Activated CD4-positive, alpha-beta T cell treated with anti-CD3 and anti-CD28 coated beads, Interleukin-2, amount 10 ng/mL, durations not matched to agents 24 days and 14 days (primary cell): ENCODE measurements at regions of chr20 and their contacts with region 1.

Region 1: DNA sequence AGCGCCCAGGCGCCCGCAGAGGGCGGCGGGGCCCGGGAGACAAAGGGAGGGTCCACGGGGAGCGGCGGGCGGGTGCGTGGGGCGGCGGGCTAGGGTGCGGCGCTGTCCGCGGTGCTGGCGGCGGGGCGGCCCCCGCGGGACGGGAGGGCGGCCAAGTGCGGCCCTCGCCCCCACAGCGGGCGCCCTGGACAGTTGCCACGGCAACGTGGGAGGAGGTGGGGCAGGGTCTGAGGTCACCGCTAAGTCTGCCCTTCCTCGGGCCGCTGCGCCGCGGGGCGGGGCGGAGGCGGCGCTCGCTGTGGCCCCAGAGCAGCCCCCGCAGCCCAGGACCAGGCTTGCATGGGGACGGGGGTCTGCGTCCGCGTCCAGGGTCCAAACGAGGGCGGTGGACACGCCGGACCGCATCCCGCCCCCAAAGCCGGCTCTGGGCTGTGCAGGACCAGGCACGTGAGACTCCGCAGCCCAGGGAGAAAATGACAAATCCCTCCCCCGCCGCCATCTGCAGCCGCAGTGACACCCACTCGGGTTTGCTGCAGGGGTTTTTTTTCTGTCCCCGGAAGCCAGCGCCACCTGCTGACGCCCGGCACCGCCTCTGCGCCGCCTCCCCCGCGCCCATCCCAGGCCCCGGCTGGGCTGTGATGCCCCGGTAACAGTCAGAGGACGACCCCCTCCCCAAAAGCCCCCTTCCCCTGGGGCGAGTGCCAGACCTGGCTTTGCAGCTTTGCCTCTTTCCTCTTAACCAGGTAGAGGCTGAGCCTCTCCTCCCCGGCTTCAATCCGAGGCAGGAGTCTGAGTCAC is 36.8 kb downstream of the YTHDF1 start:
- DNase-seq: peak; percentile 84
- H3K4me3 Mint-ChIP-seq: peak overlapping the region; percentile 59
- H3K27ac Mint-ChIP-seq: peak overlapping the region; percentile 41
- H3K4me1 Mint-ChIP-seq: peaks cover 9% of the 10 kb centered on the region
- H3K27me3 Mint-ChIP-seq: peaks cover 39% of the 10 kb centered on the region

Region 2: DNA sequence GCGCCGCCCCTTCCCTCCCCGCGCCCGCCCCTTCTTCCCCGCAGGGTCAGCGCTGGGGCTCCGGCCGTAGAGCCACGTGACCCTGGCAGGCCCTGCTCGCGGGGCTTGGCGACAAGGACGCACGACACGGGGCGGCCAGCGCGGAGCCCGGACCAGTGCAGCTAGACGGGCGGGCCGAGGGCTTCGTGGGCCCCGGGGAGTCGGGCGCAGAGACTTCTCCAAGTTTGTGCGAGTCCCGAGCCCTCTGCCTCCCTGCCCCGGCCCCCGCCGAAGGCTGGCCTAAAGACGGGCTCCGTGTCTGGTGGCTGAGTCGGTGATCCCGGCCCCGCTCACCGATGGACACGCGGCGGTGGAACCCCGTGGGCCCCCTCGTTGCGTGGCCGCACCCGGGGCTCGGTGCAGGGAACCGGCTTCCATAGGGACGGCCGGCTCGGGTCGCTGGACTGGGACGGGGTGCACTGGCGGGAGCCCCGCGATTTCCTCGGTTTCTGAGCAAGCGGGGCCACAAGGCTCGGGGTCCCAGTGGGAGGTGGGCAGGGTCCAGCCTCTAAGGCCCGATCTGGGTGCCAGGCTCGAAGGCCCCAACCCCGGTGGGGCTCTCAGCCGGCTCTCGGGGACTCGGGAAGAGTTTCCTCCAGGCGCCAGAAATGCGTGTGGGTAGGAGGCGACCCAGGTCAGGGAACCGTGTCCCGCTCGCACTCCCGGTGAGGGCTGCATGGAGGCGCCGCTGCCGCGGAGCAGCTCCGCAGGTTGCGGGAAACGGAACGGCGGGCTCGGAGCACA is 702.8 kb before region 1 on chr20:
- intact Hi-C with region 1: loop called (anchors 5 kb)
- DNase-seq: no peak
- H3K4me3 Mint-ChIP-seq: no peak overlapping the region
- H3K27ac Mint-ChIP-seq: no peak overlapping the region
- H3K4me1 Mint-ChIP-seq: no peaks in the 10 kb centered on the region
- H3K27me3 Mint-ChIP-seq: peaks cover 50% of the 10 kb centered on the region

Region 3: DNA sequence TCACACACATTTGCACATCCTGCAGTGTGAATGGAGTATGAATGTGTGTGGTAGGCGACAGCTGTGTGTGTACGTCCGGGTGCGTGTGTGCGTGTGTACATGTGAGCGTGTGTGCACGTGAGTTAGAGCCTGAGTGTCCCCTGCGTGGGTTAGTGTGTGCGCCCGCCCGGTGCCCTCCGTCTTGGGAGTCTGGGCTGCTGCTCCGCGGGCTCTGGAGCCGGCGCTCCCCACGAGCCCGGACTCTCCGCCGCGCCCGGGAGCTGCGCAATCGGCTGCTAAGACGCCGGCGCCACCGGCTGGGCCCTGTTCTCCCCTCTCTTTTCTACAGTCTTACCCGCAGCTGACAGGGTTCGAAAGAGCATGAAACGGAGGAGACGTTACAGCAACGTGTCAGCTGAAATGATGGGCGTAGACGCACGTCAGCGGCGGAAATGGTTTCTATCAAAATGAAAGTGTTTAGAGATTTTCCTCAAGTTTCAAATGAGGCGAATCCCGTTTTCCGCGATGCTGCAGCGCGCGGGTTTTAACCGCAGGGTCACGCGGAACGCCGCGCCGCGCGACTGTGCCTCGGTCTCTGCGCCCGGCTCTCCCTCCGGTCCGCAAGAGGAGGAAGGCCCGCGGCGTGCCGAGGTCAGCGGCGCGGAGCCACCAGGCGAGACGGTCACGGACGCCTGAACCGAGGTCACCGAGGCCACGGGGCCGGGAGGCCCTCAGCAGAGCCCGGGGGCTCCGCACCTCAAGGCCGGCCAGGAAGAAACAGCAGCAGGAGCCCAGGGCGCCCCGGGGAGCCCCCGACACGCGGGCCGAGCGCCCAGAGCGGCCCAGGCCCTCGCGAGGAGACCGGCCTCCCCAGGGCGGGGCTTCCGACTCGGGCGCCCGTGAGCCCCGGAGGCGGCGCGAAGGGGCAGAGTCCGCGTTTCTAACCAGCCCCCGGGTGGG is 77.0 kb before region 1 on chr20:
- intact Hi-C with region 1: loop called (anchors 2 kb)
- DNase-seq: peak; percentile 88
- H3K4me3 Mint-ChIP-seq: peak overlapping the region; percentile 86
- H3K27ac Mint-ChIP-seq: peak overlapping the region; percentile 88
- H3K4me1 Mint-ChIP-seq: peaks cover 6% of the 10 kb centered on the region
- H3K27me3 Mint-ChIP-seq: peaks cover 2% of the 10 kb centered on the region